ENCODE measurements at regions of chr1 and their contacts with region 1.

Region 1: GRCh38 chr1:181105134-181106021 is 16.9 kb downstream of the IER5 start:
- DNase-seq: peak; percentile 84 to 90
- ATAC-seq: peak; percentile 75 to 81
- H3K4me3 ChIP-seq: peak overlapping the region; percentile 65
- H3K27ac ChIP-seq: peak overlapping the region; percentile 98 to 99
- H3K4me1 ChIP-seq: peaks cover 89% of the 10 kb centered on the region
- CTCF ChIP-seq: no peak
- EP300 ChIP-seq: peak in 1 of 2 experiments; percentile 28; a peak in 1 of 5 replicates
- POLR2A ChIP-seq: peak; percentile 47; the same call in 1 of the 2 replicates
- RAD21 ChIP-seq: no peak; a peak in 1 of 5 replicates

Region 2: GRCh38 chr1:180734366-180734765 is 371.0 kb before region 1 on chr1:
- CTCF ChIA-PET with region 1: no interaction called
- POLR2A ChIA-PET with region 1: no interaction called
- DNase-seq: no peak
- ATAC-seq: no peak
- H3K4me3 ChIP-seq: no peak overlapping the region
- H3K27ac ChIP-seq: no peak overlapping the region
- H3K4me1 ChIP-seq: no peaks in the 10 kb centered on the region
- CTCF ChIP-seq: no peak
- EP300 ChIP-seq: no peak
- POLR2A ChIP-seq: no peak
- RAD21 ChIP-seq: no peak

Region 3: DNA sequence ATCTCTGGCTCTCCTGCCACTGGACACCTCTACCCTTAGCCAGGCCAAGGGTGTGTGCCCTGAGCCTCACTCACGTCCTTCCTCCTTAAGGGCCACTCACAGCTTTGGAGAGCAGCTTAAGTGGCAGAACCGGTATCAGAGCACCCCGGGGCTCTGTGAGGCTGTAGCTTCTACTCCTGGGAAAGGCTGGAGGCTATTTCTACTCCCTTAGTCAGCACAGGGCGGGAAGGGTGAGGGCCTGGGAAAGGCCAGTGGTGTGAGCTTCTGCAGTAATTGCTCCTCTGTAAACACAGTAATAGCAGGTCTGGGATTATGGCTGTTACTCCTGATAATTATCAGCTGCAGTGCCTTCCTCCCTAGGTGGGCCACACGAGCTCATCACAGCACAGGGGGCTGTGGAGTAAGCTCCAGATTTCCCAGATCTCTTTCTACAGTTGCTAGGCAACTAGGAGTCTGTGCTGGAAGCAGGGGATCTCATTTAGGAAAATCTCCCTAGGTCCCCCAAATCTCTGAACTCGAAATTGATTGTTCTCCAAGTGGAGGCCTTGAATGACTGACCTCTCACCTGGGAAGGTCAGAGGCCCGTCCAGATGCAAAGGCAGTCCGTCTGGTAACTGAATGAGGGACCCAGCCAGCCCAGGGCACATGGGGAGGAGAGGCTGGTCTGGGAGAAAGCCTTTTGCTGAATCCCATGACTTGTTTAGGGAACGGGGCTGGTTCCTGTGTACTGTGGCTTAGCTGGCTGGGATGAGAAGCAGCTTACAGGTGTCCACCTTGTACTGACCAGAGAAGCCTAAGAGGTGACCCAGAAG is 12.5 kb after region 1 on chr1:
- CTCF ChIA-PET with region 1: interaction called, 34 read pairs
- POLR2A ChIA-PET with region 1: interaction called, 10 read pairs
- DNase-seq: peak in 1 of 2 experiments; percentile 73
- ATAC-seq: peak; percentile 51 to 57
- H3K4me3 ChIP-seq: no peak overlapping the region
- H3K27ac ChIP-seq: peak overlapping the region; percentile 64 to 98
- H3K4me1 ChIP-seq: peaks cover 90% of the 10 kb centered on the region
- CTCF ChIP-seq: no peak
- EP300 ChIP-seq: no peak
- POLR2A ChIP-seq: no peak
- RAD21 ChIP-seq: no peak

Region 4: DNA sequence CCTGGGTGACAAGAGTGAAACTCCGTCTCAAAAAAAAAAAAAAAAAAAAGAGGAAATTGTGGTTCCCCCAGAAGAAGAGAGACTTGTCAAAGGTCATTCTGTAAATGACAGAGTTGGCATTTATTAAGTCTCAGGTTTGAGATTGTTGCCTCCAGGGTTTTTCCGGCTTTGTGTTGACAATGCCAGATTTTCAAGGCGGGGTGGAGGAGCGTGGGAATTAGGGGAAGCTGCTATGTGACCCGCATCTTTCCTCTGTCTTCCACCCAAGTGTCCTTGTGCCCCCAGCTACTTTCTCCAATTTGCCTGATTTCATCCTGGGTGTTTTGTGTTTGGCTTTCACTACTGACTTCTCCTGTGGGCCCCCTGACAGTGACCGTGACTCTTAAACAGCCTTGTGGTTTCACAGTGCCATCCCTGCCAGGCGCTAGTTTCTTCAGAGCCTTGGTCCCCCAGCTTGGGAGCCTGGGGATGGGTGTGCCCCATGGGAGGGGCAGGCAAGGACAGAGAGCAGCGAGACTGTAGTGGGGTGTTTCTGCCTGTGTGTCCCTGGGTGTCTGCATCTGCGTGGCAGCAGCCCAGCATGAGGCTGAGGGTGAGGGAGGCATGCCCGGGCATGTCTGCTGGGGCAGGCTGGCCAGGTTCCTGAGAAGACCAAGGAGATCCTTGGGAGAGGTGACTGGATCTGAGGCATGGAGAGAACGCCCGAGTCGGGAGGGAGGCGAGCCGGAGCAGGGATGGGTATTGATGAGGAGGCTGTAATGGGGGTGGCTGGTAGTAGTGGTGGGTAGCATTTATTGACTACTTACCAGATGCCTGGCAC is 29.4 kb after region 1 on chr1:
- CTCF ChIA-PET with region 1: interaction called, 774 read pairs
- POLR2A ChIA-PET with region 1: interaction called, 24 read pairs
- DNase-seq: peak in 1 of 2 experiments; percentile 77
- ATAC-seq: peak; percentile 54 to 62
- H3K4me3 ChIP-seq: no peak overlapping the region
- H3K27ac ChIP-seq: peak overlapping the region; percentile 92 to 98
- H3K4me1 ChIP-seq: peaks cover 62% of the 10 kb centered on the region
- CTCF ChIP-seq: no peak
- EP300 ChIP-seq: no peak
- POLR2A ChIP-seq: no peak
- RAD21 ChIP-seq: no peak